HepG2 (cell line): ENCODE measurements at regions of chr7 and their contacts with region 1.

Region 1: DNA sequence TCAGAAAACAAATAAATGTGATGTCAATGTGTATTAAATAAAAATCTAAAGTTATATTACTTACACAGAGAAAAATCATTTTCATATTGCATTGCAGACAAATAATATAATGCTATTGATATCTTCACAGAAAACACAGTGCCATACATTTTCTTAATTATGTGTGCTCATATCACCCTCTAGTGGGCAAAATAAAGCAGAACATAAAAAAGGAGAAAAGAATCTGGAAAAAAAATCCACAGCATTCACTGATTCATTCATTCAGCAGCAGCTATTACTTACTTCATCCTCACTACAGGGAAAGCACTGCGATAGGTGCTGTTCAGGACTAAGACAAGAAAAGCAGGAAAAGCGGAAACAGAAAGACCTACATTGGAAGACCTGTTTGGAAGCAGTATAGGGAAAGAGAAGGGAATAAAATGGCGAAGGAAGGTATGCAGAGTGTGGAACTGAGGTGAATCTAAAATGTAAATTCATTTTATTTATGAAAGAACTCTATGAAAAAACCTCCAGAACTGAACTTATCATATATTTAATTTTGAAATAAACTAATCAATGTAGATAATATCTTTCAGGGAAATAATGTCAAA is 73.2 kb downstream of the POT1 start:
- DNase-seq: peak; percentile 37
- ATAC-seq: peak; percentile 50; the same call in 1 of the 3 replicates
- H3K4me3 ChIP-seq: no peak overlapping the region
- H3K27ac ChIP-seq: no peak overlapping the region
- H3K4me1 ChIP-seq: no peaks in the 10 kb centered on the region
- H3K27me3 ChIP-seq: no peaks in the 10 kb centered on the region
- CTCF ChIP-seq: peak; percentile 54
- EP300 ChIP-seq: no peak
- POLR2A ChIP-seq: no peak
- RAD21 ChIP-seq: 0 out of 2 replicates have a peak, but pooled peaks have one; percentile 27

Region 2: DNA sequence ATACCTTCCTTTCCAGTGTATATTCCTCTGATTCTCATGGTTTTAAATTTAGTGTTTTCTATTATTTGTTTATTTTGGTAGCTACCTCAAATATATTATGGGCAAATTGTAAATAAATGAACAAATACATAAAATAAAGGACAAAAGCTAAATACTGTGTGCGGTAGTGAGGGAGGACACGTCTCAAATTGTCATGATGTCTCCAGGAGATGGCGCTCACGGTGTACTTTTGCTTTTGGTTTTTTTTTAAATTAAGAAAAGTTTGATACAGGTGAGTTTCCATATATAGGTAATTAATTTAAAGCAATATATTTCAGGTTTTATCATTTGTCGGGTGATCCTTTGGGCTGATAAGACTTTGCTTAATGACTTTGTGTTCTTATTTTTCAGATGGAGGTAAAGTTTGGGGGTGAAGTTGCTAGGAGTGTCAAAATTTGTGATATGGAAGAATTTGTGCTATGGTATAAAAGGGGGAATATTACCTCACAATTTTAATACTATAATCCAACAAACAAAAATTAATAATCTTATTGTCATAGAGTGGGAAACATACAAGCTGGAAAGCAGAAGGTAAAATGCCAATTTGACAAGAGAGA is 755.1 kb before region 1 on chr7:
- CTCF ChIA-PET with region 1: interaction called, 3 read pairs
- POLR2A ChIA-PET with region 1: no interaction called
- in situ Hi-C with region 1: no loop called
- intact Hi-C with region 1: loop called (anchors 5 kb)
- DNase-seq: peak; percentile 14
- ATAC-seq: peak; percentile 52; the same call in 2 of the 3 replicates
- H3K4me3 ChIP-seq: no peak overlapping the region
- H3K27ac ChIP-seq: no peak overlapping the region
- H3K4me1 ChIP-seq: no peaks in the 10 kb centered on the region
- H3K27me3 ChIP-seq: no peaks in the 10 kb centered on the region
- CTCF ChIP-seq: peak; percentile 41
- EP300 ChIP-seq: no peak
- POLR2A ChIP-seq: no peak
- RAD21 ChIP-seq: no peak

Region 3: DNA sequence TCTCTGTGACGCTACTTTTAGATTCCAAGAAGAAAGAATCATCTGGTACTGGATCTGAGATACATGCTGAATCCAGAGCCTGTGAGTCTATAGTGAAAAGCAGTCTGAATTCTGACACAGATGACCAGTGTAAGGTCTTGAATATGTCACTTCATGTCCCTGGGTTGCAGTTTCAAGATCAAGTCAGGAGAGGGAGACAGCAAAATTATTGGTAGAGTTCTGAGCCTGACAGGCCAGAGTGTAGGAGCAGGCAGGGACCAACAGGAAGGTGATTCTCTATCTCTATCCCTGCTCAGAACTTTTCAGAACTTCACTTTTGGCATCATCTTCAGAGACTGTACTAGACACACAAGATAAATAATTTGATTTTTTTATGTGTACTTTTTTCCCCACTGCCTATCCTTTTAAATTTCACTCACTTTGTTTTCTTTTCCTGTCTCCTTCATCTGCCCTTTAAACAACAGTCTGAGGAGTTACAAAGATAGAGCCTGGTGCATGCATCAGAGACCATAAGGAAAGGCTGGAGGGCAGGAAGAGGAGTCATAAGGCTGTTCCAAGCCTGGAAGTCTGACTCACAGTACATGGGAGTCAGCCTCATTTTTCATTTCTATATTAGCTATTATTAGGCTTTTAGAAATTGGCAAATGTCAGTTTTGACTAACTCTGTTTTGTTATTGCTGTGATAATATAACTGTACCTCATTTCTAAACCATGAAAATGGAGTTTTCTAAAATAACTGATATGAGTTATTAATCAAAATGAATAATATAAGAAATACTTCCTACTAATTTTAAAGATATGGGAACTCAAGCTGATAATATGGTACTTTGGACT is 703.3 kb before region 1 on chr7:
- CTCF ChIA-PET with region 1: interaction called, 6 read pairs
- POLR2A ChIA-PET with region 1: no interaction called
- in situ Hi-C with region 1: loop called (anchors 10 kb)
- intact Hi-C with region 1: loop called (anchors 1 kb)
- DNase-seq: peak; percentile 27
- ATAC-seq: peak; percentile 95
- H3K4me3 ChIP-seq: no peak overlapping the region
- H3K27ac ChIP-seq: no peak overlapping the region
- H3K4me1 ChIP-seq: no peaks in the 10 kb centered on the region
- H3K27me3 ChIP-seq: no peaks in the 10 kb centered on the region
- CTCF ChIP-seq: peak; percentile 46
- EP300 ChIP-seq: no peak
- POLR2A ChIP-seq: no peak
- RAD21 ChIP-seq: no peak

Region 4: DNA sequence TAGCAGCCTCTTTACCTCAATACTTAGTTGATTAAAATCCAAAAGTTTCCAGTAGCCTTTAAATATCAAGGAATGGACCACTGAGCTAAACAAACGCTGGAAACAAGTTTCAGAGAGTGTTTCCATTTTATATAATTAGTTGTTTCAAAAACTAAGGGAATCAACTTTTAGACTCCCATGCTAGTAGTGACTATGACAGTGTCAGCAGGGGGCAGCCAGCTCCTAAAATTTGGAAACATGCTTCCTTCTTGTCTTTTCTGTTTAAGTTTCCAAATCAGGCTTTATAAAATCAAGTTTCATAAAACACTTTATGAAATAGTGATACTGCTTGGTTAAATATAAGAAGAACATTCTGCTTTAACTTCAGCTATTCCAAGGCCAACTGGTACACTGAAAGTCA is 685.3 kb before region 1 on chr7:
- CTCF ChIA-PET with region 1: no interaction called
- POLR2A ChIA-PET with region 1: no interaction called
- in situ Hi-C with region 1: no loop called
- intact Hi-C with region 1: loop called (anchors 5 kb)
- DNase-seq: no peak
- ATAC-seq: no peak
- H3K4me3 ChIP-seq: no peak overlapping the region
- H3K27ac ChIP-seq: no peak overlapping the region
- H3K4me1 ChIP-seq: no peaks in the 10 kb centered on the region
- H3K27me3 ChIP-seq: no peaks in the 10 kb centered on the region
- CTCF ChIP-seq: peak; percentile 29
- EP300 ChIP-seq: no peak
- POLR2A ChIP-seq: no peak
- RAD21 ChIP-seq: no peak

Region 5: DNA sequence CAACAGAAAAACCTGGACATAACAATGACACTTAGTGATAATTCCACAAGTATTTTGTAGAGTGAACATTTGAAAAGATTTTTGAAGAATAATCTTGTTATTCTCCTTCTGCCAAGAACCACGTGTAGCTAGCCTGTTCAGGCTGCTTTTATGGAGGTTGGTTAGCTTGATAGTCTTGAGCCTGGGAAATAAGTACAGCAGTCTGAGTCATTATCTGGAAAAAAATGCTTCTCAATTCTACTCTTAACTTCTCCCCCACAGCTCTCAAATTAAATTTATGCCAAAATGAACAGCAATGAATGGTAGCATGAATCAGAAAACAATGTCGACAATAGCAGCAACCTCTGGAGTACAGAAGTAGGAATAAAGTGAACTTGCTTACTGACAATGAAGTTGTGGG is 154.0 kb before region 1 on chr7:
- CTCF ChIA-PET with region 1: no interaction called
- POLR2A ChIA-PET with region 1: no interaction called
- in situ Hi-C with region 1: no loop called
- intact Hi-C with region 1: no loop called
- DNase-seq: no peak
- ATAC-seq: no peak
- H3K4me3 ChIP-seq: no peak overlapping the region
- H3K27ac ChIP-seq: no peak overlapping the region
- H3K4me1 ChIP-seq: no peaks in the 10 kb centered on the region
- H3K27me3 ChIP-seq: no peaks in the 10 kb centered on the region
- CTCF ChIP-seq: no peak
- EP300 ChIP-seq: no peak
- POLR2A ChIP-seq: no peak
- RAD21 ChIP-seq: no peak